ENCODE measurements at regions of chr10 and their contacts with region 1.

Region 1: GRCh38 chr10:119494236-119495060 is 48.1 kb downstream of the RGS10 start:
- DNase-seq: no peak
- ATAC-seq: no peak
- H3K4me3 ChIP-seq: no peak overlapping the region
- H3K27ac ChIP-seq: no peak overlapping the region
- H3K4me1 ChIP-seq: peaks cover 18% of the 10 kb centered on the region
- CTCF ChIP-seq: no peak
- EP300 ChIP-seq: no peak
- POLR2A ChIP-seq: no peak
- RAD21 ChIP-seq: no peak

Region 2: GRCh38 chr10:119416855-119417254 is 77.6 kb before region 1 on chr10:
- CTCF ChIA-PET with region 1: interaction called, 15 read pairs
- POLR2A ChIA-PET with region 1: no interaction called
- DNase-seq: peak; percentile 62 to 90
- ATAC-seq: peak; percentile 81 to 93
- H3K4me3 ChIP-seq: no peak overlapping the region
- H3K27ac ChIP-seq: peak overlapping the region in 1 of 2 experiments; percentile 53; a peak in 1 of 6 replicates
- H3K4me1 ChIP-seq: no peaks in the 10 kb centered on the region
- CTCF ChIP-seq: peak; percentile 82
- EP300 ChIP-seq: no peak
- POLR2A ChIP-seq: no peak
- RAD21 ChIP-seq: peak; percentile 93 to 95

Region 3: GRCh38 chr10:119468542-119469324 is 25.7 kb before region 1 on chr10:
- CTCF ChIA-PET with region 1: interaction called, 17 read pairs
- POLR2A ChIA-PET with region 1: no interaction called
- DNase-seq: no peak
- ATAC-seq: peak in 1 of 2 experiments; percentile 12; a peak in 1 of 6 replicates
- H3K4me3 ChIP-seq: no peak overlapping the region
- H3K27ac ChIP-seq: no peak overlapping the region
- H3K4me1 ChIP-seq: no peaks in the 10 kb centered on the region
- CTCF ChIP-seq: no peak
- EP300 ChIP-seq: no peak
- POLR2A ChIP-seq: no peak
- RAD21 ChIP-seq: no peak

Region 4: DNA sequence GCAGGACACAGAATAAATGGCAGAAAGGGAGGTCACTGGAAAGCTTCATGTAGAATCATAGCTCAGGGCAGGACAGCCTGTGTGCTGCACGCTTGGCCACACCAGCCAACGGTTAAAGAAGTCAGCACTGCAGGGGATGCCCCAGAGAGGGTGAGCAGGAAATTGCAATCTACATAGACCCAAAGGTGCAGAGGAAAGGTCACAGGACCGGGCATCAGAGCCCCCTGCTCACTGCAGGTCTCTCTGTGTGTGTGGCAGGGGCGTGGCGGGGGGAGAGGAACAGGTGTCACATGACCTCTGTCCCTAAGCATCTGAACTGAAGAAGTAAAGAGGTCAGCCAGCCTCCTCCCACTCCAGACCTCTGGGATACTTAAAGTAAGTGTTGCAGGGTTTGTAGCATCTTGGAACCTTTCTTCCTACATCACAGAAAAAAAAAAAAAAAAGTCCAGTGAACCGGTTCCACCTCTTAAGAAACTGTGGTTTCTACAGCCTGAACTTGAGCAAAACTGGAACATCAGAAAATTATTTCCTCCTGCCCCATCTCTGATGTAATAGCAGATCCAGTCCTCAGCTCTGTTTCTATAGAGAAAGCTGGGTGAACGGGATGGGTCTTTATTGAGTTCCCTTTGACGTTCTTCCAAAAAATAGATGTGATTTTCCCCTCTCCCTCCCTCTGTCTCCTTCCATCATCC is 16.2 kb before region 1 on chr10:
- CTCF ChIA-PET with region 1: interaction called, 34 read pairs
- POLR2A ChIA-PET with region 1: no interaction called
- DNase-seq: no peak
- ATAC-seq: peak; percentile 9 to 31; a peak in 3 of 6 replicates
- H3K4me3 ChIP-seq: no peak overlapping the region
- H3K27ac ChIP-seq: no peak overlapping the region
- H3K4me1 ChIP-seq: no peaks in the 10 kb centered on the region
- CTCF ChIP-seq: no peak
- EP300 ChIP-seq: no peak
- POLR2A ChIP-seq: no peak
- RAD21 ChIP-seq: no peak

Region 5: GRCh38 chr10:119737827-119738226 is 243.4 kb after region 1 on chr10:
- CTCF ChIA-PET with region 1: no interaction called
- POLR2A ChIA-PET with region 1: no interaction called
- DNase-seq: peak; percentile 81 to 94
- ATAC-seq: peak; percentile 99 to 100
- H3K4me3 ChIP-seq: no peak overlapping the region
- H3K27ac ChIP-seq: peak overlapping the region; percentile 46 to 64
- H3K4me1 ChIP-seq: peaks cover 32% of the 10 kb centered on the region
- CTCF ChIP-seq: no peak
- EP300 ChIP-seq: no peak
- POLR2A ChIP-seq: no peak
- RAD21 ChIP-seq: no peak

Region 6: GRCh38 chr10:119859420-119860258 is 365.2 kb after region 1 on chr10:
- CTCF ChIA-PET with region 1: no interaction called
- POLR2A ChIA-PET with region 1: no interaction called
- DNase-seq: peak; percentile 24 to 47
- ATAC-seq: peak in 1 of 2 experiments; percentile 63; a peak in 3 of 6 replicates
- H3K4me3 ChIP-seq: no peak overlapping the region
- H3K27ac ChIP-seq: no peak overlapping the region
- H3K4me1 ChIP-seq: peaks cover 15% of the 10 kb centered on the region
- CTCF ChIP-seq: peak; percentile 80
- EP300 ChIP-seq: no peak
- POLR2A ChIP-seq: no peak
- RAD21 ChIP-seq: peak; percentile 68 to 75